ENCODE measurements at regions of chr2 and their contacts with region 1.

Region 1: DNA sequence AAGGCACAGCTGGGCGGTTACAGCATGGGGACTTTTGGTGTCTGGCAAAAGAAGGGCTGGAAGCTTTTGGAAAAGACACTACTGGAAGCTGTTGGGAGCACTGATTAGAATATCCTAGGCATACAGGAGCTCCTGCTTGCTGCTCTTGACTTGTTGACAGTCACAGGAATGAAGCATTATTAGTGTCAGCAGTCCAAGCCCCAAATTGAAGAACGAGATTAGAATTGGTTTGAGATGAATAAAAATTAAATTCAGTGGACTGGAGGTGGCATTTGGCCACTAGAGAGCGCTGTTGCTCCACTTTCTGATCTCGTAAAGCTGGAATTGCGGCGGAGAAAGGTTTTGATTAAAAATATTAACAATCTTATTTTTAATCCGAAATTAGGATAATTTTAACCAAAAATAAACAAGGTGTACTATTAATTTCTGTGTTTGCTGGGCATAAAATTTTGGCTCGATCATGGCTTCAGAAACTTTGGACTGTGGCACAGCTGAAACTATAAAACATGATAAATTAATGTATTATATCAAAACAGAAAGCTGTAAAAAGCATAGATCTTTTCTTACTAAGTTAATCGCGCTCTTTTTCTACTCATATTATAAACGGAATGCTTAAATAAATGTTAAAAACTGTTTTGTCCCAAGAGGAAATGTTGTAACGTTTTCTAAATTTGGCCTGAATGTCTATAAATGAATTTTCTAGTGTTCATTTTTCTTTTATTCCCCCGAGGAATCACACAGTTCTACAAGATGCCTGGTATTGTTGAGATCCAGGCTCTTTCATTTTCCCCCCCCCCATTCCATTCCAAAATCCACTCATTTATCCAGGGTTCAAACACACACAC is 2.4 kb upstream of the HOXD8 start:
- DNase-seq: peak in 8 of 9 donors; percentile 26 to 68 (median 54)
- ATAC-seq: peak; percentile 51
- H3K4me3 ChIP-seq: no peak overlapping the region
- H3K4me3 Mint-ChIP-seq: peak overlapping the region in 4 of 10 donors; percentile 17 to 67 (median 38)
- H3K27ac ChIP-seq: no peak overlapping the region
- H3K27ac Mint-ChIP-seq: peak overlapping the region in 3 of 9 donors; percentile 8 to 63 (median 62)
- H3K4me1 ChIP-seq: peaks cover 3 to 20% of the 10 kb centered on the region in 2 donors
- H3K4me1 Mint-ChIP-seq: peaks cover 17 to 51% (median 41%) of the 10 kb centered on the region in 7 donors
- H3K27me3 ChIP-seq: peaks cover 33 to 74% of the 10 kb centered on the region in 2 donors
- H3K27me3 Mint-ChIP-seq: peaks cover 71 to 80% (median 76%) of the 10 kb centered on the region in 5 donors

Region 2: DNA sequence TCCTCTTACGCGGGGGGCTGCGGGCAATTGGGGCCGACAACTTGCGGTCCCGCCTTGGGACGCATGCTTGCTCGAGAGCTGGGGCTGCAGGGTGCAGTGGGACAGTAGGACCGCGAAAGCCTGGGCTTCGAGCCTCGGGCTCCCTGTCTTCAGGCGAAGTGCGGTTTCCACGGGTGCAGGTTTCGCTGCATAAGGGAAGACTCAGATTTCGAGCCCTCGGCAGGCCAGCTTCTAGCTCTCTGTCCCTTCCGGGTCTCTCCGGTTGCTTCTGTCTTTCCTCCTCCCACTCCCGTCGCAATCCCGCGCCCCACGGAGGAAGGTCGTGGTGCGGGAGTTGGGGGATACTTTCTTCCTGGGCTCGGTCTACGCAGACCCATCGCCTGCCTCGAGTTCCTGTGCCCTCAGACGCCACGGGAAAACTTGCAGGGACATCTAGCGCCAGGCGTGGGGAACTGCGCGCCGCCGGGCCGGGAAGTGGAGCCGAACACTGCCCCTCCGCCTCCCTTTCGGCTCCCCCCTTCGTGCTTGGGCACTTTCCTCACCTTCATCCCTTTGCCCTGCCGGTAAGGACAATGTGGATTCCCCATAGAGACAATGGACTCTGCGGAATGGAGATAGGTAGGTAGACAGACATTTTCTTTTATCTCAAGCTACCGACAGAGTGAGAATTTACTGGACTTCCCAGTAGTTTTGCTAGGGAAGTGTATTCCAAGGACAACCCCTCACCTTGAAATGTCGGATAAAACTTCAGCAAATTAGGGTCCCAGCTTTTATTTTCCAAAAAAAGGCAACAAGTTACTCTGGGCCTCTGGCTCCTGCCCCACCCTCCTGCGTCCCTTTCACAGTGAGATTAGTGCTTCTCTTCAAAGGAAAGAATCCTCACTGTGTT is 38.9 kb before region 1 on chr2:
- CTCF ChIA-PET with region 1: no interaction called
- POLR2A ChIA-PET with region 1: no interaction called
- intact Hi-C with region 1: loop called (anchors 2 to 5 kb)
- DNase-seq: no peak
- ATAC-seq: peak; percentile 49
- H3K4me3 ChIP-seq: no peak overlapping the region
- H3K4me3 Mint-ChIP-seq: peak overlapping the region; percentile 17 to 79 (median 64)
- H3K27ac ChIP-seq: no peak overlapping the region
- H3K27ac Mint-ChIP-seq: peak overlapping the region in 6 of 9 donors; percentile 14 to 98 (median 40)
- H3K4me1 ChIP-seq: peaks cover 0 to 3% of the 10 kb centered on the region in 2 donors
- H3K4me1 Mint-ChIP-seq: peaks cover 6 to 34% (median 18%) of the 10 kb centered on the region in 7 donors
- H3K27me3 ChIP-seq: peaks cover 30 to 83% of the 10 kb centered on the region in 2 donors
- H3K27me3 Mint-ChIP-seq: peaks cover 79 to 91% (median 82%) of the 10 kb centered on the region in 5 donors

Region 3: DNA sequence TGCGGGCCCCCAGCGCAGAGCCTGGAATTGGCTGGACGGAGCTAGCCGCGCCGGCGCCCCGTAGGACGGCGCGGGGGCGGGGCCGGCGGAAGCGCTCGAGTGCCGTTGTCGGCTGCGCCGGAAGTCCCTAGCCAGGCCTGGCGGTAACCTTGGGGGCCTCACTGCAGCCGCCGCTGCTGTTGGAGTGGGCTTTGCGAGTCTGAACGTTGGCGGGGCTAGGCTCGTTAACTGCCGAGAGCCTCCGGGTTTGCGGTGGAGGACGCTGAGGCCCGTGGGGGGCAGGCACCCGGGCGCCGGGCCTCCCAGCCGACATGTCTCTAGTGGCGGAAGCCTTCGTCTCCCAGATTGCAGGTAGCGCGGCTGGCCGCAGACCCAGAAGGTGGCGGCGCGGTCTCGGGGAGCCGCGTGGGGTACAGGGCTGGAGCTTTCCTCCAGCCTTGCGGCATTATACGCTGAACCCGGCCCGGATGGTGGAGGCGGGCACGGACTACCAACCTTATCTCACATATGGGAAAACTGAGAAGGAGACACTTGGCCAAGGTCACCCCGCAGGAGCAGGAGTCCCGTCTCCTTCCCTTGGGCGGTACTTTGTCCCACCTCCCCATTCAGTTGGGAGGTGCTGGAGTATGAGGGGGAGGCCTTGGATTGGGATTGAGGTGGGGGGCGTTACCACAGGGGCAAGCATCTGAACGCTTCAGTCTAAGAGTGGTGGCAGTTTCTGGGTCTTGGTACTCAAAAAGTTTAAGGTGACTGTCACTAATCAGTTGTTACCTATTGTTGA is 142.4 kb after region 1 on chr2 and contains the start of gene MTX2:
- CTCF ChIA-PET with region 1: no interaction called
- POLR2A ChIA-PET with region 1: no interaction called
- intact Hi-C with region 1: loop called in 1 of 2 experiments (anchors 5 kb)
- DNase-seq: peak; percentile 48 to 80 (median 75)
- ATAC-seq: peak; percentile 92
- H3K4me3 ChIP-seq: peak within 1 kb of the TSS; percentile 97
- H3K4me3 Mint-ChIP-seq: peak within 1 kb of the TSS; percentile 95 to 99 (median 97)
- H3K27ac ChIP-seq: peak within 1 kb of the TSS; percentile 84
- H3K27ac Mint-ChIP-seq: peak within 1 kb of the TSS; percentile 70 to 97 (median 92)
- H3K4me1 ChIP-seq: peaks cover 7 to 8% of the 10 kb centered on the region in 2 donors
- H3K4me1 Mint-ChIP-seq: peaks cover 16 to 46% (median 39%) of the 10 kb centered on the region in 7 donors
- H3K27me3 ChIP-seq: no peaks in the 10 kb centered on the region
- H3K27me3 Mint-ChIP-seq: peaks cover 0 to 19% (median 9%) of the 10 kb centered on the region in 5 donors
- total RNA-seq, gene MTX2: 6.6 to 14.3 (median 9.3) TPM

Region 4: GRCh38 chr2:176554101-176555048 is 427.2 kb after region 1 on chr2:
- CTCF ChIA-PET with region 1: interaction called, 15 read pairs
- POLR2A ChIA-PET with region 1: no interaction called
- intact Hi-C with region 1: loop called (anchors 1 kb)
- DNase-seq: peak in 8 of 9 donors; percentile 23 to 66 (median 48)
- ATAC-seq: peak; percentile 69
- H3K4me3 ChIP-seq: peak overlapping the region; percentile 62
- H3K4me3 Mint-ChIP-seq: peak overlapping the region; percentile 75 to 93 (median 85)
- H3K27ac ChIP-seq: no peak overlapping the region
- H3K27ac Mint-ChIP-seq: peak overlapping the region in 3 of 9 donors; percentile 28 to 41 (median 38)
- H3K4me1 ChIP-seq: no peaks in the 10 kb centered on the region
- H3K4me1 Mint-ChIP-seq: peaks cover 6 to 13% (median 13%) of the 10 kb centered on the region in 7 donors
- H3K27me3 ChIP-seq: no peaks in the 10 kb centered on the region
- H3K27me3 Mint-ChIP-seq: peaks cover 45 to 66% (median 48%) of the 10 kb centered on the region in 5 donors

Region 5: DNA sequence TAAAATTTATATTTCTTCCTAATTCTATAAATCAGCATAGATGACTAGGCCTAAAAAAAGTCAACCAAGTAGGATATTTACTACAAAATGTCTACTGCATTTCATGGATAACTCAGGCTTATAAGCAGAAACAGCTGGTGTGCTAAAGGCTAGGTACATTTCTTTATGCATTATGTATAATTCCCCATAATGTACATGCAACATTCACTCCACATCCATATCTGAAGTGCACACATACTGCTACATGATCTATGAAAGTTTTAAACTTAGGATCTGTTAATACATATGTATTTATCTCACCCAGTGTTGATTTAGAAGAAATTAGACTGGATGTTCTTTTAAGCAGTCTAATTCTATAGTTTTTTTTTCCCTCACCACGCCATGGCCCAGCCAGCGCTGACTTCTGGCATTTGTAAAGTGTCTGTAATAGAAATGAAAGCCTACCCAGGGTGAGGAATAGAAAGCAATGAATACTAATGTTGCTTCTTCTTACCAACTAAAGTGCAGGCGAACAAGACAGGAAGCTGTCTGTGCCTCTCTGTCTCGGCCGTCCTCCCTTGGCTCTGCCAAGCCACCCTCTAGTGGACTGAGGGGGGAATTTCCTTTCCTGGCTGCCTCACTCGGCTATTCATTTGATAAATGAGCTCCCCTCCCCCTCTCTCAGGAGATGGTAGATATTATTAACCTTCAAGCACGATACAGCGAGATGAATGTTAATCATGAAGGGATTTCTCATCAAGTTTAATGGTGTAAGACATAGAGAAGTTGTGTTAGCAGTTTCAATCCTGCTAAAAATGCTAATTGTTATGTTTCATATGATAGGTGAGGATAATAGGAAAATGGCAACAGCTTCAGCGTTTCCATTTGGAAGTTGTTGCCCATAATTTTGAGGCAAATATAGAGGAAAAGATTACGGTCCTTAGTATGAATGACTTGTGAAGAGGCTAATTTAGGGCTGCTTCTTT is 526.6 kb after region 1 on chr2:
- CTCF ChIA-PET with region 1: interaction called, 27 read pairs
- POLR2A ChIA-PET with region 1: no interaction called
- intact Hi-C with region 1: loop called (anchors 1 kb)
- DNase-seq: peak in 4 of 9 donors; percentile 23 to 26 (median 23)
- ATAC-seq: peak; percentile 49
- H3K4me3 ChIP-seq: no peak overlapping the region
- H3K4me3 Mint-ChIP-seq: no peak overlapping the region
- H3K27ac ChIP-seq: no peak overlapping the region
- H3K27ac Mint-ChIP-seq: no peak overlapping the region
- H3K4me1 ChIP-seq: no peaks in the 10 kb centered on the region
- H3K4me1 Mint-ChIP-seq: peaks cover 0 to 14% (median 6%) of the 10 kb centered on the region in 7 donors
- H3K27me3 ChIP-seq: no peaks in the 10 kb centered on the region
- H3K27me3 Mint-ChIP-seq: peaks cover 45 to 67% (median 65%) of the 10 kb centered on the region in 5 donors

Region 6: GRCh38 chr2:177419274-177419673 is 1292.1 kb after region 1 on chr2:
- CTCF ChIA-PET with region 1: no interaction called
- POLR2A ChIA-PET with region 1: no interaction called
- intact Hi-C with region 1: loop called in 1 of 2 experiments (anchors 10 kb)
- DNase-seq: no peak
- ATAC-seq: no peak
- H3K4me3 ChIP-seq: no peak overlapping the region
- H3K4me3 Mint-ChIP-seq: no peak overlapping the region
- H3K27ac ChIP-seq: no peak overlapping the region
- H3K27ac Mint-ChIP-seq: peak overlapping the region in 1 of 9 donors; percentile 22
- H3K4me1 ChIP-seq: no peaks in the 10 kb centered on the region
- H3K4me1 Mint-ChIP-seq: peaks cover 5 to 54% (median 27%) of the 10 kb centered on the region in 7 donors
- H3K27me3 ChIP-seq: no peaks in the 10 kb centered on the region
- H3K27me3 Mint-ChIP-seq: no peaks in the 10 kb centered on the region